CD14-positive monocyte (primary cell): ENCODE measurements at regions of chr5 and their contacts with region 1.

Region 1: GRCh38 chr5:96595300-96596090 is 66.7 kb upstream of the CAST start:
- DNase-seq: peak; percentile 24 to 37 (median 32)
- H3K4me3 ChIP-seq: no peak overlapping the region
- H3K4me3 Mint-ChIP-seq: no peak overlapping the region
- H3K27ac ChIP-seq: no peak overlapping the region
- H3K27ac Mint-ChIP-seq: peak overlapping the region in 3 of 7 donors; percentile 14 to 59 (median 31)
- H3K4me1 ChIP-seq: peaks cover 13 to 15% of the 10 kb centered on the region in 2 donors
- H3K4me1 Mint-ChIP-seq: peaks cover 26% of the 10 kb centered on the region
- H3K27me3 ChIP-seq: peaks cover 5 to 6% of the 10 kb centered on the region in 2 donors
- H3K27me3 Mint-ChIP-seq: peaks cover 0 to 14% (median 11%) of the 10 kb centered on the region in 3 donors
- CTCF ChIP-seq: peak; percentile 82

Region 2: DNA sequence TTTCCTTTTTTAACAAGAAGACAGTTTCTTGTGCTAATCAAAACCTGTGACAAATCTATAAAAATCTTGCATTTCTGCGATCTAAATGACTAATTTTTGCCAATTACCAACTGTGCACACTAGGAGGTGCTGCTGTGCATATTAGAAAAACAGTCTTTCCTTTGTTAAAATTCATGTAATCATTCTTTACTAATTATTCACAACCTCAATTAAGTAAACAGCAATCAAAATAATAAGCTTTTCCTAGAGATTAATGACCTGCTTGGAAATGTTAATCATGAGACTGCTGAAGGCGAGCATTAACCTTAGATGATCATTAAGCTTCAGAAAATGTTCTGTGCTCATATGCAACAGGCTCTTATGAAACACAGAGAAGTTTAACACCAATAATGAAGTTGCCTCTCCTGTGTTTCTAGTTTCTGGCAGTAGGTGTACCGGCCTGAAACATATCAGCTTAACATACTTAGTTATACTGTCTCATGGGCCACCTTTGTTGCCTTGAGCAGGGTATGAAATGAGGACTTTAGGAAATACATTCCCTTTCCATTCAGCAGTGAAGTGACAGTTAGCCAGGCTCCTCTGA is 931.2 kb before region 1 on chr5:
- intact Hi-C with region 1: loop called in 1 of 2 experiments (anchors 5 kb)
- DNase-seq: peak in 2 of 3 donors; percentile 21 to 44
- H3K4me3 ChIP-seq: no peak overlapping the region
- H3K4me3 Mint-ChIP-seq: no peak overlapping the region
- H3K27ac ChIP-seq: no peak overlapping the region
- H3K27ac Mint-ChIP-seq: no peak overlapping the region
- H3K4me1 ChIP-seq: peaks cover 3 to 10% of the 10 kb centered on the region in 2 donors
- H3K4me1 Mint-ChIP-seq: peaks cover 7% of the 10 kb centered on the region
- H3K27me3 ChIP-seq: no peaks in the 10 kb centered on the region
- H3K27me3 Mint-ChIP-seq: no peaks in the 10 kb centered on the region
- CTCF ChIP-seq: peak; percentile 84

Region 3: GRCh38 chr5:95864944-95865504 is 730.5 kb before region 1 on chr5:
- intact Hi-C with region 1: loop called in 1 of 2 experiments (anchors 5 kb)
- DNase-seq: no peak
- H3K4me3 ChIP-seq: no peak overlapping the region
- H3K4me3 Mint-ChIP-seq: no peak overlapping the region
- H3K27ac ChIP-seq: no peak overlapping the region
- H3K27ac Mint-ChIP-seq: peak overlapping the region in 2 of 7 donors; percentile 17 to 61
- H3K4me1 ChIP-seq: peaks cover 64 to 75% of the 10 kb centered on the region in 2 donors
- H3K4me1 Mint-ChIP-seq: peaks cover 77% of the 10 kb centered on the region
- H3K27me3 ChIP-seq: no peaks in the 10 kb centered on the region
- H3K27me3 Mint-ChIP-seq: peaks cover 0 to 3% (median 3%) of the 10 kb centered on the region in 3 donors
- CTCF ChIP-seq: no peak